ENCODE measurements at regions of chr1 and their contacts with region 1.

Region 1: GRCh38 chr1:200669314-200670241 is at the start of gene DDX59:
- DNase-seq: peak; percentile 95 to 98 (median 97)
- ATAC-seq: peak; percentile 94 to 96 (median 95)
- H3K4me3 ChIP-seq: peak within 1 kb of the TSS; percentile 58 to 97 (median 85)
- H3K27ac ChIP-seq: peak within 1 kb of the TSS; percentile 98 to 100 (median 100)
- H3K4me1 ChIP-seq: peaks cover 0 to 45% (median 29%) of the 10 kb centered on the region in 12 donors
- H3K27me3 ChIP-seq: no peaks in the 10 kb centered on the region
- CTCF ChIP-seq: no peak
- POLR2A ChIP-seq: peak; percentile 73 to 93
- total RNA-seq, gene DDX59: 12.9 to 21.6 (median 15.9) TPM

Region 2: GRCh38 chr1:200588698-200589097 is 80.9 kb before region 1 on chr1:
- intact Hi-C with region 1: no loop called
- DNase-seq: no peak
- ATAC-seq: peak in 1 of 4 donors; percentile 64
- H3K4me3 ChIP-seq: no peak overlapping the region
- H3K27ac ChIP-seq: peak overlapping the region in 1 of 12 donors; percentile 69
- H3K4me1 ChIP-seq: peaks cover 0 to 14% (median 0%) of the 10 kb centered on the region in 12 donors
- H3K27me3 ChIP-seq: no peaks in the 10 kb centered on the region
- CTCF ChIP-seq: no peak
- POLR2A ChIP-seq: no peak

Region 3: DNA sequence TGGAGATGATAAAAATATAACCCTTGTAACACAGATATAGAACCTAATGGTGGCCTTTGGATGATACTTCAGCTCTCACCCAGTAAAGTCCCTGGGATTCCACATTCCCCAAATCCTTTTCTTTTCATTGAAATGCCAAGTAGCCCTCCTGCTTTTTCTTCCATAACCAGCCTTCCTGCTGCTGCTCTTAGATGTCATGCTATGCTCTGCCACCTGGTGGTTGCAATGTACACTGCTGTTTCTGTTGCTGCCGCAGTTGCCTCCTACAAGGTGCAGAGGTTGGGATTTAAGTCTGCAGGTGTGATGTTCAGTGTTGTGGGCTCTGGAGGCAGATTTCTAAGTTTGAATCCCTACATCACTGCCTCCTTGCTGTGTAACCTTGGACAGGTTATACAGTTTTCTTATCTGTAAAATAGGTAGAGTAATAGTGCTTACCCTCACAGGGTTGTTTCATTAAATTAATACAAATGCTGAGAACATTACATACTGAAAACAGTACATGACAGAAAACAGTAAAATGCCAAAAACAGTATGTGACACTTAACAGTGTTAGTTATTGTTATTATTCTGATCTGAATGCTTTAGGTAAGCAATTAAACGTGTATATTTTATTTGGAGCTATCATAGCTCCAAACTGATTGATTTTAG is 133.4 kb after region 1 on chr1:
- intact Hi-C with region 1: loop called in 6 of 10 experiments (anchors 1 to 5 kb)
- DNase-seq: peak in 4 of 5 donors; percentile 65 to 78 (median 73)
- ATAC-seq: peak; percentile 64 to 90 (median 86)
- H3K4me3 ChIP-seq: no peak overlapping the region
- H3K27ac ChIP-seq: no peak overlapping the region
- H3K4me1 ChIP-seq: peaks cover 0 to 16% (median 2%) of the 10 kb centered on the region in 12 donors
- H3K27me3 ChIP-seq: no peaks in the 10 kb centered on the region
- CTCF ChIP-seq: peak; percentile 89 to 97 (median 93)
- POLR2A ChIP-seq: no peak

Region 4: DNA sequence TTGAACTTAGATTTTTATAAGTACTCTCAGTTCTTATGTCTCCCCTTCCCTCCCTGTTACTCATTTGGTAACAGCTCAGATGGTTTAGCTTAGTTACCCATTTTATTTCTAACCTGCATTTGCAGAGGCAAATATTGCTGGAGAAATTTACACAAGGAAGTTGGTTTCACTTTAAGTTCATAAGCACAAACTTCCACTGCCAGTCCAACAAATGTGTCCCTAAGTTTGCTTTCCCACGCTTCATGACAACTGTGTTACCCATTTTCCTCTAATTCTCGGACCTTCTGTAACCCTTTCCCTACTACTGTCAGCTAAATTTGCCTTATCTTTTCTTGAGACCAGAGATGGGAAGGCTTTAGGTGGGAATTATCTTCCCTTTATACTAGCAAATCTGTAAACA is 139.3 kb after region 1 on chr1:
- intact Hi-C with region 1: loop called in 3 of 10 experiments (anchors 5 kb)
- DNase-seq: no peak
- ATAC-seq: no peak
- H3K4me3 ChIP-seq: no peak overlapping the region
- H3K27ac ChIP-seq: no peak overlapping the region
- H3K4me1 ChIP-seq: peaks cover 0 to 9% (median 0%) of the 10 kb centered on the region in 12 donors
- H3K27me3 ChIP-seq: no peaks in the 10 kb centered on the region
- CTCF ChIP-seq: no peak
- POLR2A ChIP-seq: no peak

Region 5: GRCh38 chr1:200866521-200866920 is 196.9 kb after region 1 on chr1:
- intact Hi-C with region 1: no loop called
- DNase-seq: no peak
- ATAC-seq: peak in 2 of 4 donors; percentile 24 to 34
- H3K4me3 ChIP-seq: no peak overlapping the region
- H3K27ac ChIP-seq: no peak overlapping the region
- H3K4me1 ChIP-seq: peaks cover 0 to 3% (median 0%) of the 10 kb centered on the region in 12 donors
- H3K27me3 ChIP-seq: peaks cover 0 to 27% (median 10%) of the 10 kb centered on the region in 9 donors
- CTCF ChIP-seq: no peak
- POLR2A ChIP-seq: no peak